ENCODE measurements at regions of chr7 and their contacts with region 1.

Region 1: DNA sequence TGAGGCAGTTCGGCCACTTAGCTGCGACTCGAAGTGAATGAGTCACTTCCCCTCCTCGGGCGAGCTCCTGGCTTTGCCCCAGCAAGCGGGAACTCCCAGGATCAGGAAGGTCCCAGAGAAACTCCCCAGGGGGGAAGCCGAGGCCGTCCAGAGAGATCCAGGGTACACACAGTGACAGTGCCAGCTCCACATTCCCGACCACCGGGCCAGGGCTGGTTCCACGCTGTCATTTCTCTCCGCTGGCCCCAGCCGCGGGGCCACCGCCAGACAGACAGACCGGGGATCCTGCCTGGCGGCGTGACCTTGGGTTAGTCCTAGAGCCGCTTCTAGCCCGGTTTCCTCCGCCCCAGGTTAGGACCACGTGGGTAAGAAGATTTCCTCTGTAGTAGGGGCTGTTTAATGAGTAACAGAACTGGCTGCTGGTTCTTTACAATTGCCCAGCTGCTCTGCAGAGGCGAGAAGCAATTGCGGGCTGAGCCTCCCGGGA is 463 bp upstream of the UPP1 start:
- DNase-seq: no peak
- H3K4me3 Mint-ChIP-seq: peak overlapping the region; percentile 89
- H3K27ac Mint-ChIP-seq: peak overlapping the region; percentile 94
- H3K4me1 Mint-ChIP-seq: peaks cover 79% of the 10 kb centered on the region
- H3K27me3 Mint-ChIP-seq: no peaks in the 10 kb centered on the region

Region 2: GRCh38 chr7:48074204-48074654 is 14.4 kb before region 1 on chr7:
- CTCF ChIA-PET with region 1: interaction called, 11 read pairs
- POLR2A ChIA-PET with region 1: no interaction called
- DNase-seq: no peak
- H3K4me3 Mint-ChIP-seq: no peak overlapping the region
- H3K27ac Mint-ChIP-seq: no peak overlapping the region
- H3K4me1 Mint-ChIP-seq: peaks cover 6% of the 10 kb centered on the region
- H3K27me3 Mint-ChIP-seq: no peaks in the 10 kb centered on the region

Region 3: GRCh38 chr7:48101968-48102367 is 13.4 kb after region 1 on chr7:
- CTCF ChIA-PET with region 1: interaction called, 17 read pairs
- POLR2A ChIA-PET with region 1: no interaction called
- DNase-seq: peak; percentile 13
- H3K4me3 Mint-ChIP-seq: no peak overlapping the region
- H3K27ac Mint-ChIP-seq: no peak overlapping the region
- H3K4me1 Mint-ChIP-seq: peaks cover 48% of the 10 kb centered on the region
- H3K27me3 Mint-ChIP-seq: no peaks in the 10 kb centered on the region

Region 4: GRCh38 chr7:48251766-48252165 is 163.2 kb after region 1 on chr7:
- CTCF ChIA-PET with region 1: no interaction called
- POLR2A ChIA-PET with region 1: no interaction called
- DNase-seq: no peak
- H3K4me3 Mint-ChIP-seq: no peak overlapping the region
- H3K27ac Mint-ChIP-seq: no peak overlapping the region
- H3K4me1 Mint-ChIP-seq: peaks cover 6% of the 10 kb centered on the region
- H3K27me3 Mint-ChIP-seq: peaks cover 3% of the 10 kb centered on the region